PC-9 (cell line): ENCODE measurements at regions of chr6 and their contacts with region 1.

Region 1: GRCh38 chr6:71523548-71523947 is 234.9 kb downstream of the OGFRL1 start:
- DNase-seq: no peak
- H3K4me3 ChIP-seq: no peak overlapping the region
- H3K27ac ChIP-seq: no peak overlapping the region
- H3K4me1 ChIP-seq: 0 out of 2 replicates have a peak, but pooled peaks cover 5% of the 10 kb centered on the region
- H3K27me3 ChIP-seq: no peaks in the 10 kb centered on the region
- CTCF ChIP-seq: no peak

Region 2: GRCh38 chr6:72132427-72132826 is 608.9 kb after region 1 on chr6:
- CTCF ChIA-PET with region 1: no interaction called
- POLR2A ChIA-PET with region 1: interaction called, 12 read pairs
- intact Hi-C with region 1: no loop called
- DNase-seq: no peak
- H3K4me3 ChIP-seq: no peak overlapping the region
- H3K27ac ChIP-seq: no peak overlapping the region
- H3K4me1 ChIP-seq: no peaks in the 10 kb centered on the region
- H3K27me3 ChIP-seq: no peaks in the 10 kb centered on the region
- CTCF ChIP-seq: no peak

Region 3: DNA sequence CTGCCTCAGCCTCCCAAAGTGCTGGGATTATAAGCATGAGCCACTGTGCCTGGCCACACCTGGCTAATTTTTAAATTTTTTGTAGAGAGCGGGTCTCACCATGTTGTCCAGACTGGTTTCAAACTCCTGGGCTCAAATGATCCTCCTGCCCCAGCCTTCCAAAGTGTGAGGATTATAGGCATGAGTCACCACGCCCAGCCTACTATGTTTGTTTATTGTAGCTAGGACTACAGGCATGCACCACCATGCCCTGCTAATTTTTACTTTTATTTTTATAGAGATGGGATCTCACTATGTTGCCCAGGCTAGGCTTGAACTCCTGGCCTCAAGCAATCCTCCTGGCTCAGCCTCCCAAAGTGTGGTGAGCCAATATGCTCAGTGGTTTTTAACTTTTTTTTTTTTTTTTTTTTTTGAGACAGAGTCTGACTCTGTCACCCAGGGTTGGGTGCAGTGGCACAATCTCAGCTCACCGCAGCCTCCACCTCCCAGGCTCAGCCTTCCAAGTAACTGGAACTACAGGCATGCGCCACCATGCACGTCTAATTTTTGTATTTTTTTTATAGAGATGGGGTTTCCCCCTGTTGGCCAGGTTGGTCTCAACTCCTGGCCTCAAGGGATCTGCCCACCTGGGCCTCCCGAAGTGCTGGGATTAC is 1859.0 kb after region 1 on chr6:
- CTCF ChIA-PET with region 1: interaction called, 18 read pairs
- POLR2A ChIA-PET with region 1: no interaction called
- intact Hi-C with region 1: no loop called
- DNase-seq: peak in 1 of 2 experiments; percentile 24
- H3K4me3 ChIP-seq: no peak overlapping the region
- H3K27ac ChIP-seq: no peak overlapping the region
- H3K4me1 ChIP-seq: peaks cover under 1% of the 10 kb centered on the region; the same call in 1 of the 2 replicates
- H3K27me3 ChIP-seq: no peaks in the 10 kb centered on the region
- CTCF ChIP-seq: no peak